Natural killer cell (primary cell): ENCODE measurements at regions of chr12 and their contacts with region 1.

Region 1: DNA sequence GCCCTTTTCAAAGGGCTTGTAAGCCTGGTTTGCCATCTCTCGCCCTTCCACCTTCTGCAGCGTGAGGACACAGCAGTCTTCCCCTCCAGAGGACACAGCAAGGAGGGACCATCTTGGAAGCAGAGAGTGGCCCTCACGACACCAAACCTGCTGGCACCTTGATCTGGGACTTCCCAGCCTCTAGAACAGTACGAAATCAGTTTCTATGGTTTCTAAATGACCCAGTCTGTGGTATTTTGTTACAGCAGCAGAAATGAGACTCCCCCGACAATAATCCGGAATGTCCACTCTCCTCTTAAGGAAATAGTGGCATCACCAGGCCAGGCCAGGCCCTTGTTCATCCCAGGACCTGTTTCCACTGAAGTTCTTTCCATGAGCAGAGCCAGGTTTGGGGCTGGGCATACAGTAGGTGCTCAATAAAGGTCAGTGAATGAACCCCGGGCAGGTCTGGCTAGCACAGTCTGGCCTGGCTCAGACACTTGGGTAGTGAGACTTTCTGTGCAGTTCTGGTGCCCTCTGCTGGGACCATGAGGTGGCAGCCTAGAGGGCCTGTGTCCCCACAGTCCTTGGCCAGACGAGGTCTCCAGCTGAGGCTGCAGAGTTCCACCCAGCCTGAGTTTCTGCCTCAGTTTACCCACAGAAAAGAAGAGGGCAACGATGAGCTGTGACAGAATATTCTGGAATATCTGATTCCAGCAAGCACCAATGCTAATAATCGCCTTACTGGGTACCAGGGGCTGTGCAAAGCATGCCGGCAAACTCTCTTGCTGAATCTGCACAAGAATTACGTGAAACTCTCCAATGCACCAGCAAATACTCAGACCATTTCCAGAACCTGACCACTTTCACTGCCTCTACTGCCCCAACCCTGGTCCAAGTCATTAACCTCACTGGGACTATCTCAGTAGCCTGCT is 14.0 kb downstream of the ABCB9 start:
- DNase-seq: peak; percentile 67 to 88
- ATAC-seq: peak; percentile 94 to 100 (median 97)
- H3K4me3 ChIP-seq: no peak overlapping the region
- H3K4me3 Mint-ChIP-seq: no peak overlapping the region
- H3K27ac ChIP-seq: no peak overlapping the region
- H3K27ac Mint-ChIP-seq: no peak overlapping the region
- H3K4me1 ChIP-seq: peaks cover 19% of the 10 kb centered on the region
- H3K4me1 Mint-ChIP-seq: peaks cover 16 to 18% of the 10 kb centered on the region in 2 donors
- H3K27me3 ChIP-seq: no peaks in the 10 kb centered on the region
- H3K27me3 Mint-ChIP-seq: no peaks in the 10 kb centered on the region
- CTCF ChIP-seq: peak; percentile 86

Region 2: DNA sequence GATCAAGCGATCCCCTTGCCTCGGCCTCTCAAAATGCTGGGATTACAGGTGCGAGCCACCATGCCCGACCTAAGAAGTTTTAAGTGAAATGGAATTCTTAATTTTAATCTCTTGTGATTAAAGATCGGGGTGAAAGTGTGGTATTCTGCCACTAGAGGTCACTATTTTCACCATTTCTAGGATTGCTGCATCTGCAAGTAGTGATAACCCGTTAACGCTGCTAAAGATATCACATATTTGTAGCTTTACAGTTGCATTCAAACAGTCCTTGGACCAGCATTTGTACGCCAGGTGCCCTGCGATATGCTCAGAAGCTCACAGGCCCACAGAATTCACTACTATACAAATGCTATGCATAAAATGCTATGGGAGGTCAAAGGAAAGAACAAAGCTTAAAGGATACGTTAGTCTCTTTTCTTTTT is 158.5 kb before region 1 on chr12:
- intact Hi-C with region 1: loop called (anchors 1 kb)
- DNase-seq: peak in 1 of 2 donors; percentile 77
- ATAC-seq: peak; percentile 77 to 81 (median 78)
- H3K4me3 ChIP-seq: no peak overlapping the region
- H3K4me3 Mint-ChIP-seq: no peak overlapping the region
- H3K27ac ChIP-seq: no peak overlapping the region
- H3K27ac Mint-ChIP-seq: no peak overlapping the region
- H3K4me1 ChIP-seq: no peaks in the 10 kb centered on the region
- H3K4me1 Mint-ChIP-seq: peaks cover 4% of the 10 kb centered on the region in 2 donors
- H3K27me3 ChIP-seq: no peaks in the 10 kb centered on the region
- H3K27me3 Mint-ChIP-seq: no peaks in the 10 kb centered on the region
- CTCF ChIP-seq: peak; percentile 81

Region 3: DNA sequence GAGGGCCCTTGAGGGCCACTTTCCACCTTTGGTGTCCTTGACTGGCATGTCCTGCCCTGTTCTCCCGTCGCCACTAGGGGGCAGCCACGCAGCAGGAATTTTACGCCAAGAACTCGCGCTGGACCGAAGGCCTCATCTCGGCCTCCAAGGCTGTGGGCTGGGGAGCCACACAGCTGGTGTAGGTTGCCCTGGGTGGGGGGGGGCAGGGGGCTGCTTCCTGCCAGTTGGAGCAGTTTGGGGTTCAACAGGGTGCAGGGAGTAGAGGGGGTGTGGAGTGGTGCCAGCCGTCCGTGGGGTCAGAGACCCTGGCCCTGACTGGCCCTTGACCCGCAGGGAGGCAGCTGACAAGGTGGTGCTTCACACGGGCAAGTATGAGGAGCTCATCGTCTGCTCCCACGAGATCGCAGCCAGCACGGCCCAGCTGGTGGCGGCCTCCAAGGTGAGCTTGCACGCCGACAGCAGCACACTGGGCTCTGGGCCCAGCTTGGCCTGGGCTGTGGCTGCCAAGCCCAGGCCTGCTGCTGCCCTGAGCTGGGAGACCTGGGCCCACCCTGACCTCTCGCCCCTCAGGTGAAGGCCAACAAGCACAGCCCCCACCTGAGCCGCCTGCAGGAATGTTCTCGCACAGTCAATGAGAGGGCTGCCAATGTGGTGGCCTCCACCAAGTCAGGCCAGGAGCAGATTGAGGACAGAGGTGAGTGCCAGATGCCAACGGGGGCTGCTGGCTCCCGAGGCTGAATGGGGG is 91.7 kb before region 1 on chr12:
- intact Hi-C with region 1: loop called (anchors 1 kb)
- DNase-seq: peak; percentile 81 to 88
- ATAC-seq: peak; percentile 63 to 81 (median 71)
- H3K4me3 ChIP-seq: no peak overlapping the region
- H3K4me3 Mint-ChIP-seq: no peak overlapping the region
- H3K27ac ChIP-seq: no peak overlapping the region
- H3K27ac Mint-ChIP-seq: peak overlapping the region; percentile 45 to 57
- H3K4me1 ChIP-seq: peaks cover 23% of the 10 kb centered on the region
- H3K4me1 Mint-ChIP-seq: peaks cover 7 to 12% of the 10 kb centered on the region in 2 donors
- H3K27me3 ChIP-seq: no peaks in the 10 kb centered on the region
- H3K27me3 Mint-ChIP-seq: no peaks in the 10 kb centered on the region
- CTCF ChIP-seq: peak; percentile 75

Region 4: GRCh38 chr12:122880668-122881067 is 71.6 kb before region 1 on chr12:
- intact Hi-C with region 1: loop called (anchors 5 kb)
- DNase-seq: peak; percentile 21 to 57
- ATAC-seq: peak; percentile 57 to 71 (median 58)
- H3K4me3 ChIP-seq: no peak overlapping the region
- H3K4me3 Mint-ChIP-seq: peak overlapping the region; percentile 83
- H3K27ac ChIP-seq: no peak overlapping the region
- H3K27ac Mint-ChIP-seq: peak overlapping the region; percentile 81 to 88
- H3K4me1 ChIP-seq: peaks cover 69% of the 10 kb centered on the region
- H3K4me1 Mint-ChIP-seq: peaks cover 89 to 90% of the 10 kb centered on the region in 2 donors
- H3K27me3 ChIP-seq: no peaks in the 10 kb centered on the region
- H3K27me3 Mint-ChIP-seq: no peaks in the 10 kb centered on the region
- CTCF ChIP-seq: peak; percentile 25

Region 5: GRCh38 chr12:122965851-122966722 is 13.9 kb after region 1 on chr12 and contains the start of gene ABCB9:
- intact Hi-C with region 1: no loop called
- DNase-seq: peak; percentile 80 to 96
- ATAC-seq: peak; percentile 98 to 99 (median 98)
- H3K4me3 ChIP-seq: peak within 1 kb of the TSS; percentile 48
- H3K4me3 Mint-ChIP-seq: peak within 1 kb of the TSS; percentile 45
- H3K27ac ChIP-seq: peak within 1 kb of the TSS; percentile 39
- H3K27ac Mint-ChIP-seq: peak within 1 kb of the TSS in 1 of 2 donors; percentile 65
- H3K4me1 ChIP-seq: peaks cover 16% of the 10 kb centered on the region
- H3K4me1 Mint-ChIP-seq: peaks cover 4 to 7% of the 10 kb centered on the region in 2 donors
- H3K27me3 ChIP-seq: no peaks in the 10 kb centered on the region
- H3K27me3 Mint-ChIP-seq: no peaks in the 10 kb centered on the region
- CTCF ChIP-seq: no peak
- total RNA-seq, gene ABCB9: 2.4 to 4.0 (median 3.3) TPM